ENCODE measurements at regions of chr1 and their contacts with region 1.

Region 1: DNA sequence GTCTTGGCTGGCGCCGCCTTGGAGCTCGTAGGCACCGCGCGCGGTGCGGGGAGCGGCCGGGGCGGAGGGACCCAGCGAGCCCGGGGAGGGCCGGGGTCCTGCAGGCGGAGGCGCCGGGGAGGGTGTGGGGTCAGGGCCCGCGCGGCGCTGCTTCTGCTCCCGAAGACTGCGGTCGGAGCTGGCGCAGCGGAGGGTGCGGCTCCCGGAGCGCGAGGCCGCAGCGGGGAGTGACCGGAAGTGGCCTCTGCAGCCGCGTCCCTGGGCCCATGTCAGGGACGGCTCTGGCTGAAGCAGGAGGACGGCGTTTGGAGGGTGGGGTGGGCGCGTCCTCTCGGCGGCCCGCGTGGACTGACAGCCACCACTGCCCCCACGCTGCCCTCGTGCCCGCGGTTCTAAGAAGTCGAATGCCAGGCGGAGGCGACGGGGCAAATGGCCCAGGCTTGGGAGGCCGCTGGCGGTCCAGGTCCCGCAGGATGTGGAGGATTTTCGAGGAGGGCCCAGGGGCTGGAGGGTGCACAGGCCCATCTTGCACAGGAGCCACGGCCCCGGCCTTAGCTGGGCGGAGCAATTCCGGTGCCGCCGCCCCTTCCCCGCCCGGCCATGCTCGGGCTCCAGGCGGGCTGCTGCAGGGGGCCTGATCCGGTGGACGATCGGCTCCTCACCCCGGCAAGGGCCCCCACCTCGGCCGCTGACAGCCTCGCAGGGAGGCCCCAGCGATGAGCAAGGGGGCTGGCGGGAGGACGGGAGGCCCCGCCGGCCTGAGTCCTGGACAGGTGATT is 7.7 kb upstream of the ZNF669 start:
- DNase-seq: peak; percentile 86

Region 2: DNA sequence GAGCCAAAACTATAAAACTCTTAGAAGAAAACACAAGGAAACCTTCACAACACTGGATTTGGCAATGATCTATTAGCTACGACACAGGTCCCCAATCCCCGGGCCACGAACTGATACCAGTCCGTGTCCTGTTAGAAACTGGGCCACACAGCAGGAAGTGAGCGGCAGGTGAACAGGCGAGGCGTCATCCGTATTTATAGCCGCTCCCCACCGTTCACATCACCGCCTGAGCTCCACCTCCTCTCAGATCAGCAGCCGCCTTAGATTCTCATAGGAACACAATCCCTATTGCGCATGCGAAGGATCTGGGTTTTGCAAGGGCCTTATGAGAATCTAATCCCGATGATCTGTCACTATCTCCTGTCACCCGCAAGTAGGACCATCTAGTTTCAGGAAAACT is 557.7 kb before region 1 on chr1:
- intact Hi-C with region 1: no loop called
- DNase-seq: no peak

Region 3: DNA sequence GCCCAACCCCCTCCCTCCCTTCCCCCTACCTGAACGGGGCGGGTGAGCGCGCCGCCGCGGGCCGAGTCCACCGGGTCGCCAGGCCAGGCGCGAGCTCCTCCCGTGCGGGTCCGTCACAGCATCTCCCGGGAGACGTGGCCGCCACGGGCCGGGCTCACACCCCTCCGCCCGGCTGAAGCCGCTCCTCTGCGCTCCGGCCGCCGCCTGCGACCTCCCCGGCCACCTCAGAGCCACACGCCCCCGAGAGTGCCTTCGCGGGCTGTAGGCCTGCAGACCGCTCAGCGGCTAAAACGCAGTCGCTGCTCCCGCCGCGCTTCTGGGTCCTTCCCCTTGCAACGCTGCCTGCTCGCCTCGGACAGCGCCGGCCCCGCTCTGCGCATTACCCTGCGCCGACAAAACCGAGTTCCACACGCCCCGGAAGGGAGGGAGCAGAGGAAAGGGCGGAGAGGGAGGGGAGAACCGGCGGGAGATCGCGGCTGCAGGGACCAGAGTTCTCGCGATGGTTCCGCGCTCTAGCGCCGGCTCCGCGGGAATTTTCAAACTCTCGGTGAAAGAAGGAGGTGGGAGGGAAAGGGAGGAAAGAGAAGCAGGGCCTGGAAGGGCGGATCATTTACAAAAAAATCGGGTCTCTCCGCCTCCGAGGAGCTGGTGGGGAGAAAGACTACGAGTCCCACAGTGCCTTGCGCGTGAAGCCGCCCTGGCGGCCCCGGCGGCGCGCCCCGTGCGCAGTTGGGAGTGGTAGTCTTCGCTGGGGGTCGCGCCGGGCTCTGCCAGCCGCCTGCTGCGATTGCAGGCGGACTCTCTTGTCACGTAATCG is 180.1 kb before region 1 on chr1 and contains the start of gene AHCTF1:
- intact Hi-C with region 1: loop called (anchors 5 kb)
- DNase-seq: peak; percentile 99
- total RNA-seq, gene AHCTF1: 15.3 TPM

Region 4: DNA sequence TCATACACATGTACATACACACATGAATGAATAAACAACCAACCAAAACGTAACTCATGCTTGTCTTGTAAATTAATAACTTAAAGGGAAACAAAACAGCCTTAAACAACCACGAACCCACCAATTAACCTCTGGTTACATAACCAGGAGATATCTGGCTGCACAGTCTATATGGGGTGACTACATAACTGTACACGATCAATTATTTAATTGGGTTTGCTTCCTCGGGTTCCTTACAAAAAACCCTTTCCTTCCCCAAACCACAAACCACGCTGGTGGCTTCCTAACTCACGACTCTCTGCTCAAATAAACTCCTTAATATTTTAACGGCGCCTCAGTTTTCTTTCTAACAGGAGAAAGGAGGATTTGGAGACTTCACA is 34.0 kb before region 1 on chr1:
- intact Hi-C with region 1: no loop called
- DNase-seq: no peak

Region 5: DNA sequence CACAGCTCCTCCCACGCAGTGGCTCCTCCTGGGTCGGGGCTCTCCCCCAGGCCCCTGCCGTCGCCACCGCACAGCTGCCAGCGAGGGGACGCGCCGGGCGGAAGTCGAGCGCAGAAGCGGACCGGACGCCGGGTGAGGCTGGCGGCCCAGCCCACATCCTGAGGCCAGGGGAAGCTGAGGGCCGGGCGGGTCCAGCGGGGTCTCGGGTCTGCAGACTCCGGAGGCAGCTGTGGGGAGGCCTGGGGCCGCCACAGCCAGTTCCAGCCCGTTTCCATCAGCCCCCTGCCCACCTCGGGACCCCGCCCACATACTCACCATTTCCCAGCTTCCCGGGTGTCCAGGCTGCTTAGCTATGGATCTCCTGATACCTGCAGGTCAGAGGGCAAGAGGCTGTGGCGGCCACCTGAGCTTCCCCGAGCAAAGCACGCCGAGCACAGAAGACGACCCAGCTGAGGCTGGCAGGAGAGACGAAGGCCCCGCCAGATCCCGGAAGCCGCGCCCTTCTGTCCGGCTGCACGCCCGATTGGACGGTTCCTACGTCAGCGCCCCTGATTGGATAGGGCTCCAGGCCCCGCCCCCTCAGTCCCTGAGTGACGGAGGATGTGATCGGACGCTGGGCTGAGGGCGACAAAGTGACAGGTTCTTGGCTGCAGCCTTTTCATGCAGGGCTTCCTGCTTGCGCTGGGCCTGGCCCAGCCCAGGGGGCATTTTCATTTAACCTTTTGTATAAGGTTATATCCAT is 98.7 kb after region 1 on chr1:
- intact Hi-C with region 1: loop called (anchors 5 kb)
- DNase-seq: peak; percentile 99

Region 6: GRCh38 chr1:247331172-247331991 is 219.5 kb after region 1 on chr1 and contains the start of gene ZNF496:
- intact Hi-C with region 1: loop called (anchors 5 kb)
- DNase-seq: peak; percentile 86
- total RNA-seq, gene ZNF496: 17.3 TPM

Region 7: DNA sequence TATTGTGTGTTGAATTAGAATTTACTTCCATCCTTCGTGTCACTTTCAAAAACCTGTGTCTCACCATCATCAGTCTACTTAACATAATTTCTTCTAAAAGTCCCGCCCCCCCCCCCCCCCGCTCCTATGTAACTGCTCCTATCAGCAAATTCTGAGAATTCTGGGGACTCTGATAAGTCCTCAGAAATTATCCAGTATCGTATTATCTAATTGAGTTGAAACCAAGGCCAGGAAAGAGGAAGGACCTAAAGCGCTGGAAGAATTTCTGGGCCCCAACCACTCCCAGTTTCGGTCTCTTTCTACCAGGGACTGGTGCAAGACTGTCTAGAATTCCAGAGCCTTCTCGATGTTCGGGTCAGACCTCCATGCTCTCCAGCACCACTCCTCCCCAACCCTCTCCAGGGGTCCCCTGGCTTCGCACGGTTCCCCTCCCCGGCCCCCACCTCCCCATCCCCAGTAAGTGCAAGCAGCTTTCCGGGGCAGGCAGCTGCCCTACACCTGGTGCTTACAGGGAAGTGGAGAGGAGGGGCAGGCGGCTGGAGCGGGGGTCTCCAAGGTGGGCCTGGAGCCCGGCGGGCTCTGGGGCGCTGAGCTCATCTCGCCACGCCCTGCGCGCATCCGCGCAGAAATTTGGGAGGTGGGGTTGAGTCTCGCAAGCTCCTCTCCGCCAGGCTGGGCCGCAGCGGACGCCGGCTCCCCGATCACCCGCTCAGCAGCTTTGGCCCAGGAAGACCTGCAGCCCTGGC is 235.8 kb after region 1 on chr1:
- intact Hi-C with region 1: no loop called
- DNase-seq: no peak

Measured in cardiac septum (tissue), 1 donor.